Calu3 (cell line): ENCODE measurements at regions of chr2 and their contacts with region 1.

Region 1: GRCh38 chr2:176140513-176141317 is 10.6 kb upstream of the HOXD4 start:
- DNase-seq: peak; percentile 89
- H3K4me3 Mint-ChIP-seq: peak overlapping the region; percentile 70
- H3K27ac Mint-ChIP-seq: no peak overlapping the region
- H3K4me1 Mint-ChIP-seq: no peaks in the 10 kb centered on the region
- H3K27me3 Mint-ChIP-seq: peaks cover 6% of the 10 kb centered on the region
- CTCF ChIP-seq: peak; percentile 99

Region 2: DNA sequence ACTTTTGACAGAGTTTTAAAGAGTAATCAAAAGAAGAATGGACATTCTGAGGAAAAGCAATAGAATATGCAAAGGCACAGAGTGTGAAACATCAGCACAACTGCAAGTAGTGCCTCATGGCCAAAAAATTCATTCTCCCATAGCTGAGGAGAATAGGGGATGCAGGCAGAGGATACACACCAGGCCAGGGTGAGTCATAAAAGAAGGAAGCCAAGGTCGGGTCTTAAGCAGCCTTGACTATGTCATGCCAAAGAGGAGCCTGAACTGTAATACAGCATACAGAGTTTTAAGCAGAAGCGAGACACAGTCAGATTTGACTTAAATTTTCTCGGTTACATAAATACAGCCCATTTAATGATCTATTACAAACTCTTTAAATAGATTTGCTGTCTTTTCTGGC is 303.7 kb before region 1 on chr2:
- CTCF ChIA-PET with region 1: no interaction called
- intact Hi-C with region 1: no loop called
- DNase-seq: no peak
- H3K4me3 Mint-ChIP-seq: no peak overlapping the region
- H3K27ac Mint-ChIP-seq: no peak overlapping the region
- H3K4me1 Mint-ChIP-seq: no peaks in the 10 kb centered on the region
- H3K27me3 Mint-ChIP-seq: no peaks in the 10 kb centered on the region
- CTCF ChIP-seq: no peak

Region 3: DNA sequence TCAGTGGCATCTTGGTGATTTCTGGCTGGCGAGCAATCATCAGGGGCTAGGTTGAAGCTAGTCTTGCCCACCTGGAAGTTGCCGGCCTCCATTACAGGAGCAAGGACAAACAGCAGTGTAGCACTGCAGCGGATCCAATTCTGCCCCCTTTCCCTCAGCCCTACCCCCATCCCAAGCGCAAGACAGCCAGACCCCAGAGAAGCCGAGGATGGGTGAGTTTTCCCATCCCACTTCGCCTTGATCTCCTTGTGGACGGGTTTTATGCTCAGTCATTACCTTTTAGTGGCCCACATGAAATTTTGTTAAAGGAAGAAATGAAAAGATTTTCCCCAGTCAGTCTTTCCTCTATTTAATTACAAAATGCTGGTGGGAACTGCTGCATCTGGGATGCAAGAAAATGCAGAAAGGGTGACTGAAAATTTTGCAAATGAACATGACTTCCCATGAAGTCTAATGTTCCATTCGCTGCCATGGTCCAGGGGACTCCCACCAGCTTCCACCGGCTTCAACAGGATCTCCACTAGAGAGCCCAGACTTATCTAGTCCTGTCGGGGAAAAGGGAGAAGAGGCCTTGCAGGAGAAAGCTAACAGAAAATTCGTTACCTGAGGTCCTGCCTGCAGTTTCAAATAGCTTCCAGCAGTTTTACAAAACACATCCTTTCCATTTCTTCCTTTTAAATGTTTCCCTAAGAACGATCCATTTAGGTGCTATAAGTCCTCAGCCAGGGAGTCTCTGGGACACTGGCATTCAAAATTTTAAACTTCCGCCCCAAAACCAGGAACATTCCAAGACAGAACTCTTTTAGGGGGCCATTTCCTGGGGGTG is 20.1 kb before region 1 on chr2:
- CTCF ChIA-PET with region 1: interaction called, 11 read pairs
- intact Hi-C with region 1: no loop called
- DNase-seq: no peak
- H3K4me3 Mint-ChIP-seq: no peak overlapping the region
- H3K27ac Mint-ChIP-seq: no peak overlapping the region
- H3K4me1 Mint-ChIP-seq: no peaks in the 10 kb centered on the region
- H3K27me3 Mint-ChIP-seq: peaks cover 50% of the 10 kb centered on the region
- CTCF ChIP-seq: no peak

Region 4: DNA sequence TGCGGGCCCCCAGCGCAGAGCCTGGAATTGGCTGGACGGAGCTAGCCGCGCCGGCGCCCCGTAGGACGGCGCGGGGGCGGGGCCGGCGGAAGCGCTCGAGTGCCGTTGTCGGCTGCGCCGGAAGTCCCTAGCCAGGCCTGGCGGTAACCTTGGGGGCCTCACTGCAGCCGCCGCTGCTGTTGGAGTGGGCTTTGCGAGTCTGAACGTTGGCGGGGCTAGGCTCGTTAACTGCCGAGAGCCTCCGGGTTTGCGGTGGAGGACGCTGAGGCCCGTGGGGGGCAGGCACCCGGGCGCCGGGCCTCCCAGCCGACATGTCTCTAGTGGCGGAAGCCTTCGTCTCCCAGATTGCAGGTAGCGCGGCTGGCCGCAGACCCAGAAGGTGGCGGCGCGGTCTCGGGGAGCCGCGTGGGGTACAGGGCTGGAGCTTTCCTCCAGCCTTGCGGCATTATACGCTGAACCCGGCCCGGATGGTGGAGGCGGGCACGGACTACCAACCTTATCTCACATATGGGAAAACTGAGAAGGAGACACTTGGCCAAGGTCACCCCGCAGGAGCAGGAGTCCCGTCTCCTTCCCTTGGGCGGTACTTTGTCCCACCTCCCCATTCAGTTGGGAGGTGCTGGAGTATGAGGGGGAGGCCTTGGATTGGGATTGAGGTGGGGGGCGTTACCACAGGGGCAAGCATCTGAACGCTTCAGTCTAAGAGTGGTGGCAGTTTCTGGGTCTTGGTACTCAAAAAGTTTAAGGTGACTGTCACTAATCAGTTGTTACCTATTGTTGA is 128.8 kb after region 1 on chr2 and contains the start of gene MTX2:
- CTCF ChIA-PET with region 1: no interaction called
- intact Hi-C with region 1: loop called (anchors 5 kb)
- DNase-seq: peak; percentile 86
- H3K4me3 Mint-ChIP-seq: peak within 1 kb of the TSS; percentile 97
- H3K27ac Mint-ChIP-seq: peak within 1 kb of the TSS; percentile 81
- H3K4me1 Mint-ChIP-seq: peaks cover 13% of the 10 kb centered on the region
- H3K27me3 Mint-ChIP-seq: no peaks in the 10 kb centered on the region
- CTCF ChIP-seq: peak; percentile 26
- total RNA-seq, gene MTX2: 36.0 and 44.7 TPM in 2 replicates

Region 5: GRCh38 chr2:176317199-176317598 is 176.5 kb after region 1 on chr2:
- CTCF ChIA-PET with region 1: interaction called, 4 read pairs
- intact Hi-C with region 1: loop called (anchors 1 kb)
- DNase-seq: no peak
- H3K4me3 Mint-ChIP-seq: peak overlapping the region; percentile 16
- H3K27ac Mint-ChIP-seq: peak overlapping the region; percentile 78
- H3K4me1 Mint-ChIP-seq: peaks cover 65% of the 10 kb centered on the region
- H3K27me3 Mint-ChIP-seq: no peaks in the 10 kb centered on the region
- CTCF ChIP-seq: no peak

Region 6: GRCh38 chr2:176454893-176455811 is 314.4 kb after region 1 on chr2:
- CTCF ChIA-PET with region 1: interaction called, 87 read pairs
- intact Hi-C with region 1: loop called (anchors 1 kb)
- DNase-seq: peak; percentile 90
- H3K4me3 Mint-ChIP-seq: no peak overlapping the region
- H3K27ac Mint-ChIP-seq: no peak overlapping the region
- H3K4me1 Mint-ChIP-seq: no peaks in the 10 kb centered on the region
- H3K27me3 Mint-ChIP-seq: no peaks in the 10 kb centered on the region
- CTCF ChIP-seq: peak; percentile 94

Region 7: GRCh38 chr2:176554101-176555048 is 413.7 kb after region 1 on chr2:
- CTCF ChIA-PET with region 1: interaction called, 39 read pairs
- intact Hi-C with region 1: loop called (anchors 1 kb)
- DNase-seq: peak; percentile 49
- H3K4me3 Mint-ChIP-seq: peak overlapping the region; percentile 73
- H3K27ac Mint-ChIP-seq: peak overlapping the region; percentile 64
- H3K4me1 Mint-ChIP-seq: peaks cover 17% of the 10 kb centered on the region
- H3K27me3 Mint-ChIP-seq: no peaks in the 10 kb centered on the region
- CTCF ChIP-seq: peak; percentile 48

Region 8: DNA sequence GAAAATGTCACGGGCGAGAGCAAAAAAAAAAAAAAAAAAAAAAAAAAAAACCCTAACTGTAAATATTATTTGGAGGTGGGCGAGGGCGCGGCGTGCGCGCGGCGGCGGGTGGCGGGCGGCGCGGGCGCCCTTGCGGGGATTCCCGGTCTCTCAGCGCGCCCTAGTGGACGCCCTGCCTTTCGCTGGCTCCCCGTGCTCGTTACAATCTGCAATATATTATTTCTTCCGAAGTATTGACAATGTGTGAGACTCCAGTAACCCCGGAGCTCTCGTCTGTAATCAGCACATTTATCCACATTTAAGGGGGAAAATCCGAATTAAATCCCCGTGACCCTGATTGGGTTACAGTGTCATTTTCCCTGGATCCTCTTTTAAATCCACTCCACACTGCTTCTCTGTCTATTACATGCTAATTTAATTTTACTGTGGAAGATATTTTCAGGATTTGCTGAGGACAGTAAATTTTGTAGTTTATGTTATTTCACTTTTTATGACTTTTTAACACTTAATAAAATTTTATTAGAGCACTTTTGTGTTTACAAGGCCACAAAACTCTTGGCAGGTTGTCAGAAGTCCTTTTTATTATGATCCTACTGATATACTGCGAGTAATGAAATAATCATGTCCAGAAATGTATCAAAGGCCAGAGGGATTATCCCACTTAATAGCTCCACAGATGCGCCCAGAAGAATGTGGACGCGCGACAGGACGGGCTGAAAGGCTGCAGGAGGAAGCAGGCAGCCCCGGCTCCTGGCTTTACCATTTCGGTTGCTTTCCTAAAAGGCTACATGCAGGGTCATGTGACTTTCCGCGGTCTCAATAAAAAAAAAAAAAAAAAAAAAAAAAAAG is 497.7 kb after region 1 on chr2:
- CTCF ChIA-PET with region 1: interaction called, 10 read pairs
- intact Hi-C with region 1: loop called (anchors 1 kb)
- DNase-seq: peak; percentile 87
- H3K4me3 Mint-ChIP-seq: peak overlapping the region; percentile 78
- H3K27ac Mint-ChIP-seq: peak overlapping the region; percentile 47
- H3K4me1 Mint-ChIP-seq: no peaks in the 10 kb centered on the region
- H3K27me3 Mint-ChIP-seq: no peaks in the 10 kb centered on the region
- CTCF ChIP-seq: peak; percentile 91